WTC11 (cell line): ENCODE measurements at regions of chr3 and their contacts with region 1.

Region 1: DNA sequence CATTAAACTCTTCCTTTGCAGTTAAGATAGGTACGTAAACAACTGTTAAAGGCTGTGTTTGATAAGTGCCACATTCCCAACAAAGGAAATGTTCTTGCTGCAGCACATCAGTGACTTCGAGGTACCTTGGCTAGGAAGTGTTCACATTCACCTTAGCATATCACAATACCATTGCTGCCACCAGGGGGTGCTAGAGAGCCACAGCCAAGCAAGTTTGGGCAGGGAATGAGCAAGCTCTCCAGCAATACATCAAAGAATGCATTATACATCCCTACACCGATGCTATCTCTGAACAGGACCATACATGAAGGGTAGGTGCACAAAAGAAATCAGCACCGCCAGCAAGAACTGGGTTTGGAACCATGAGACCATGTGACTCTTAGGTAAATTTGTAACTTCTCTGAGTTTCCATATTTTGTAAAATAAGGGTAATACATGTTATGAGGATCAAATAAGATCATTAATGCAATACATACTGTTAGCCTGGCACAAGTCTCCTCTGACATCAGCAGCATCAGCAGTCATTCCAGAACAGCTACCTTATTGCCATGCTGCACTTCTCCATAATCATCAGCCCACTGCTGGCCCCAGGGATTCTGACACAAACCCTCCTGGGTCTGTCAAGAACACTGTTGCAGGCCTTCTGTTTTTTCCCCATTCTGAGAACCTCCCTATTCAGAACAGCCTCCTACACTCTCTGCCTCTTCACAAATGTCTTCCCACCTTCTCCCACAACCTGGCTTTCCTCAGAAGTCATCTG is 37.6 kb downstream of the RYK start:
- DNase-seq: peak; percentile 93
- ATAC-seq: peak; percentile 92
- H3K4me3 Mint-ChIP-seq: no peak overlapping the region
- H3K27ac Mint-ChIP-seq: peak overlapping the region; percentile 88
- H3K4me1 Mint-ChIP-seq: peaks cover 3% of the 10 kb centered on the region; the same call in 1 of the 2 replicates
- H3K27me3 Mint-ChIP-seq: no peaks in the 10 kb centered on the region
- CTCF ChIP-seq: peak; percentile 98

Region 2: DNA sequence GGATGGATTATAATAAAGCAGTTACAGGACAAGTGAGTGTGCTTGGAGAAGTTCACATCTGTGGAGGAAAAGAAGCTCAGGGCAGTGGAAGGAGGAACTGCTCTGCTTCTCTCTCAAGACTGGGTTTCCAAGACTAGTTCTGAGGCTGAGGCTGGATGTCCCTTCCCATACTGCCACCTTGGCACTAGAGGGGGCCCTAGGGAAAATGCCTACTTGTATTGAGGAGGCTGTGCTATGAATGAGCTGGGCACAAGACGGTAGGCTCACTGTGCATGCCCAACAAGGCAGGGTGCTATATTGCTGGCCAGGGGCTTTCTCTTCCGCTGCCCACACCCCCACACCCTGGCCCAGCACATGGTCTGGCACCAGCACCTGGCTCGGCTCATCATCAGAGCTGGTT is 248.5 kb before region 1 on chr3:
- CTCF ChIA-PET with region 1: interaction called, 15 read pairs
- POLR2A ChIA-PET with region 1: no interaction called
- DNase-seq: peak; percentile 24
- ATAC-seq: peak; percentile 70
- H3K4me3 Mint-ChIP-seq: no peak overlapping the region
- H3K27ac Mint-ChIP-seq: no peak overlapping the region
- H3K4me1 Mint-ChIP-seq: peaks cover 19% of the 10 kb centered on the region
- H3K27me3 Mint-ChIP-seq: no peaks in the 10 kb centered on the region
- CTCF ChIP-seq: no peak

Region 3: DNA sequence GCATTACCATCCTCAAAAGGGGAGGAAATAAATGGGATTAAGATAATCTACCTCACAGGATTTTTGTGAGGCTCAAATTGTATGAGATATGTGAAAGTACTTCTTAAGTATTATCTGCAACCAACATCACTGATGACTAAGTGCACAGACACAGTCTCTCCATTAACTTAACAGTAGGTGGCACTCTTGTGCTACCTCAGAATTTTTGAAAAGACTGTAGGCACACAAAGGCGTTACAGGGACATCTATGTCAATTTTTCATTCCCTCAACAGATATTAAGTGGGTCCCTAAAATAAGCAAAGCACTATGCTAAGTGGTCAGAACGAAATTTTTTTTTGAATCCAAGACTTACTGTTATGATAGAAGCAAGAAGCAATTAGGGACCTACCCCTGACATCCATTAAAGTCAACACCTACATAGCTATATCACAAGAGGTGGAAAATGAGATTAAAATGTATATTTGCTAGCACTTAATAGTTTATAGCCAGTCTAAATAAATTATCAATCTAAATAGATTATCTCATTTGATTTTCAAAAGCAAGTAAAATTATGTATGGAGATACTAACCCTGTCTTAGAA is 15.3 kb before region 1 on chr3:
- CTCF ChIA-PET with region 1: interaction called, 41 read pairs
- POLR2A ChIA-PET with region 1: no interaction called
- DNase-seq: no peak
- ATAC-seq: peak; percentile 78
- H3K4me3 Mint-ChIP-seq: no peak overlapping the region
- H3K27ac Mint-ChIP-seq: no peak overlapping the region
- H3K4me1 Mint-ChIP-seq: no peaks in the 10 kb centered on the region
- H3K27me3 Mint-ChIP-seq: no peaks in the 10 kb centered on the region
- CTCF ChIP-seq: peak; percentile 37; the same call in 1 of the 2 replicates

Region 4: GRCh38 chr3:134260984-134261383 is 47.9 kb after region 1 on chr3:
- CTCF ChIA-PET with region 1: interaction called, 12 read pairs
- POLR2A ChIA-PET with region 1: no interaction called
- DNase-seq: peak; percentile 27
- ATAC-seq: peak; percentile 92
- H3K4me3 Mint-ChIP-seq: no peak overlapping the region
- H3K27ac Mint-ChIP-seq: peak overlapping the region; percentile 35
- H3K4me1 Mint-ChIP-seq: peaks cover 22% of the 10 kb centered on the region
- H3K27me3 Mint-ChIP-seq: no peaks in the 10 kb centered on the region
- CTCF ChIP-seq: no peak